PC-3 (cell line): ENCODE measurements at regions of chr5 and their contacts with region 1.

Region 1: GRCh38 chr5:154610321-154611154 is 132.5 kb upstream of the HAND1 start:
- DNase-seq: peak; percentile 77
- ATAC-seq: peak; percentile 94
- H3K4me3 ChIP-seq: peak overlapping the region; percentile 67
- H3K27ac ChIP-seq: no peak overlapping the region
- H3K4me1 ChIP-seq: peaks cover 6% of the 10 kb centered on the region; the same call in 1 of the 2 replicates
- H3K27me3 ChIP-seq: peaks cover 32% of the 10 kb centered on the region; the same call in 1 of the 2 replicates
- CTCF ChIP-seq: peak; percentile 79

Region 2: GRCh38 chr5:153974131-153974812 is 636.3 kb before region 1 on chr5:
- CTCF ChIA-PET with region 1: no interaction called
- POLR2A ChIA-PET with region 1: no interaction called
- intact Hi-C with region 1: loop called (anchors 10 kb)
- DNase-seq: peak; percentile 69
- ATAC-seq: peak; percentile 59
- H3K4me3 ChIP-seq: no peak overlapping the region
- H3K27ac ChIP-seq: no peak overlapping the region
- H3K4me1 ChIP-seq: no peaks in the 10 kb centered on the region
- H3K27me3 ChIP-seq: peaks cover 16% of the 10 kb centered on the region
- CTCF ChIP-seq: peak; percentile 78

Region 3: DNA sequence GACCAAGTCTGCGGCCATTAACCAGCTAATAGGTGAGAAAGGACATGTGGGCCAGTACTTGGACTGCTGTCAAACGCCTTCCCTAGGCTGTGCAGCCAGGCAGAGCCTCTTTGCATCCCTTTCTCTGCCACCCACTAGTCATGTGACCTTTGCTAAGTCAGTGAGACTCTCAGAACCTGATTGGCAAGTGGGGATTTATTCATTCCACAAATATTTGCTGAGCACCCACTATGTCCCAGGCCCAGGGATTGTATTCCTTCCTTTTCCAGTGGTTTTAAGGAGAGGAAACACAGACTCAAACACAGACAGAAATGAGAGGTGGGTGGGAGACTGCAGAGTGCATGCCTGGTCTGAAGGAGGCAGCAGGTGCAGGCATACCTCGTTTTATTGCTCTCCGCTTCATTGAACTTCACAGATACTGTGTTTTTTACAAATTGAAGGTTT is 491.6 kb before region 1 on chr5:
- CTCF ChIA-PET with region 1: no interaction called
- POLR2A ChIA-PET with region 1: no interaction called
- intact Hi-C with region 1: no loop called
- DNase-seq: peak; percentile 83
- ATAC-seq: peak; percentile 90
- H3K4me3 ChIP-seq: no peak overlapping the region
- H3K27ac ChIP-seq: no peak overlapping the region
- H3K4me1 ChIP-seq: peaks cover 15% of the 10 kb centered on the region
- H3K27me3 ChIP-seq: no peaks in the 10 kb centered on the region
- CTCF ChIP-seq: peak; percentile 28; the same call in 1 of the 2 replicates

Region 4: GRCh38 chr5:154467655-154468354 is 142.7 kb before region 1 on chr5:
- CTCF ChIA-PET with region 1: no interaction called
- POLR2A ChIA-PET with region 1: no interaction called
- intact Hi-C with region 1: loop called (anchors 1 kb)
- DNase-seq: peak; percentile 74
- ATAC-seq: peak; percentile 98
- H3K4me3 ChIP-seq: no peak overlapping the region
- H3K27ac ChIP-seq: no peak overlapping the region
- H3K4me1 ChIP-seq: no peaks in the 10 kb centered on the region
- H3K27me3 ChIP-seq: peaks cover 28% of the 10 kb centered on the region
- CTCF ChIP-seq: peak; percentile 83

Region 5: DNA sequence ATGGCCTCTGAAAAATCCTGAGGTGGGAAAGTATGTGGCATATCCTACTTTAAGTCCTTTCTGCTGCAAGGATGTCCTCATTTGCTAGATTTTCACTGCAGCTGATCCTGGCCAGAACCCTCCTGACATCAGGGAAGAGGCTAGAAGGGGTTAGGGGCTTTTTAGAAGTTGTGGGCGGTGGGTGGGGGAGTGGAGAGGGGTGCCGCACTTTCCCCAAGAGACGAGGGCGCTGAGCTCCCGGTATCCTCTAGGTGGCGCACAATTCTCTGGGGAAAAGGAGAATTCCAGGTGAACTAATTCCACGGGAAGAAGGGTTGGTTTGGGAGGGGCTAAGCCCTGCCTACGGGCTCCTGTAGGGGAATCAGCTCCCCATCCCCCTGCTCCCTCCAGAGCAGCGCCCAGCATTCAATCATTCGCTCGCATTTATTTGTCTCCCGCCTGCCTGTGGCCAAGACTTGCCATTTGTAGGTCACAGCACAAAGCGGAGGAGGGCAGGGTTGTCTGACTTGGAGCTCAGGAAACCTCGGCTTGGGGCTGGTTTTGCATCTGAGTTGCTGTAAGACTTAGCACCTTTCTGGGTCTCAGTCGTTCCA is 89.6 kb before region 1 on chr5:
- CTCF ChIA-PET with region 1: no interaction called
- POLR2A ChIA-PET with region 1: no interaction called
- intact Hi-C with region 1: loop called (anchors 2 kb)
- DNase-seq: peak; percentile 70
- ATAC-seq: peak; percentile 33; the same call in 1 of the 2 replicates
- H3K4me3 ChIP-seq: no peak overlapping the region
- H3K27ac ChIP-seq: no peak overlapping the region
- H3K4me1 ChIP-seq: peaks cover 21% of the 10 kb centered on the region
- H3K27me3 ChIP-seq: no peaks in the 10 kb centered on the region
- CTCF ChIP-seq: peak; percentile 77

Region 6: GRCh38 chr5:154683101-154683880 is 72.8 kb after region 1 on chr5:
- CTCF ChIA-PET with region 1: no interaction called
- POLR2A ChIA-PET with region 1: no interaction called
- intact Hi-C with region 1: no loop called
- DNase-seq: no peak
- ATAC-seq: peak; percentile 10
- H3K4me3 ChIP-seq: peak overlapping the region; percentile 66; the same call in 1 of the 2 replicates
- H3K27ac ChIP-seq: no peak overlapping the region
- H3K4me1 ChIP-seq: peaks cover 3% of the 10 kb centered on the region; the same call in 1 of the 2 replicates
- H3K27me3 ChIP-seq: no peaks in the 10 kb centered on the region
- CTCF ChIP-seq: no peak